Activated CD4-positive, alpha-beta T cell treated with anti-CD3 and anti-CD28 coated beads for 36 hours (primary cell): ENCODE measurements at regions of chr12 and their contacts with region 1.

Region 1: DNA sequence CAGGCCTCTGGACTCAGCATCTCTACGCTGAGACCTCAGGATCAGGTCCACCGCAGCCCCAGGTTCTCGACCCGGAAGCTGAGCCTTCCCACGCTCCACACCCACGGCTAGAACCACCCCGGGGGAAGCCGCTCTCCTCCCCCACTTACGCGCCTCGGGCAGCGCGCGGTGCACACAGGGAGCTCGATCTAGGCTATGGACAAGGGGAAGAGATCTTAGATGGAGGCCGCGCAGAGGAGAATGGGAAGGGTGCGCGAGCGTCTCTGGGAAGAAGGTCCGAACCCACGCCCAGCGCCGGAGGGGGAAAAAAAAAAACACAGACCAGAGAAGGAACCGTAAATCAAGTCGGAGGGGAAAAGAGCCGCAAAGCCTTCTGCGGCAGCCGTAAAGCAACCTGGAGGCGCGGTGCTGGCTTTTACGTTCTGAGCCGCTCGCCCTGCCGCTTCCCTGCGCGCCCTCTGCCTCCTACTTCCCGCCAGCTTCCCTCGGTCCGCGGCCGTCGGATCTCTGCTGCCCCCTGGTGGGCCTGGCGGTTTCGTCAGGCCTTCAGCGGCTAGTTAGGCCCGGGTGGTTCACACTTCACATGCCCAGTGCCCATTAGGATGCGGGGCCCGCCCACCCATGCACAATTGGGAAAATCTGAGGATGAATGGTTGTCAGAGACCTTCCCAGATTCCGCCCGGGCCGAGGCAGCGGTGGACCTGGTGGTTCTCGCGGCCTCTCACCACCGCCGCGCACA is at the start of gene RAD52:
- DNase-seq: peak; percentile 99
- ATAC-seq: peak; percentile 93
- H3K4me3 Mint-ChIP-seq: peak within 1 kb of the TSS; percentile 100
- H3K27ac Mint-ChIP-seq: peak within 1 kb of the TSS; percentile 98
- H3K4me1 Mint-ChIP-seq: peaks cover 37% of the 10 kb centered on the region
- H3K27me3 Mint-ChIP-seq: no peaks in the 10 kb centered on the region
- total RNA-seq, gene RAD52: 16.0 to 17.4 TPM

Region 2: GRCh38 chr12:389139-390096 is 560.2 kb before region 1 on chr12 and contains the start of gene KDM5A:
- CTCF ChIA-PET with region 1: no interaction called
- POLR2A ChIA-PET with region 1: no interaction called
- intact Hi-C with region 1: loop called in 1 of 2 experiments (anchors 1 kb)
- DNase-seq: peak; percentile 94
- ATAC-seq: peak; percentile 94
- H3K4me3 Mint-ChIP-seq: peak within 1 kb of the TSS; percentile 89
- H3K27ac Mint-ChIP-seq: peak within 1 kb of the TSS; percentile 96
- H3K4me1 Mint-ChIP-seq: peaks cover 26% of the 10 kb centered on the region
- H3K27me3 Mint-ChIP-seq: no peaks in the 10 kb centered on the region
- total RNA-seq, gene KDM5A: 40.3 to 58.7 TPM

Region 3: DNA sequence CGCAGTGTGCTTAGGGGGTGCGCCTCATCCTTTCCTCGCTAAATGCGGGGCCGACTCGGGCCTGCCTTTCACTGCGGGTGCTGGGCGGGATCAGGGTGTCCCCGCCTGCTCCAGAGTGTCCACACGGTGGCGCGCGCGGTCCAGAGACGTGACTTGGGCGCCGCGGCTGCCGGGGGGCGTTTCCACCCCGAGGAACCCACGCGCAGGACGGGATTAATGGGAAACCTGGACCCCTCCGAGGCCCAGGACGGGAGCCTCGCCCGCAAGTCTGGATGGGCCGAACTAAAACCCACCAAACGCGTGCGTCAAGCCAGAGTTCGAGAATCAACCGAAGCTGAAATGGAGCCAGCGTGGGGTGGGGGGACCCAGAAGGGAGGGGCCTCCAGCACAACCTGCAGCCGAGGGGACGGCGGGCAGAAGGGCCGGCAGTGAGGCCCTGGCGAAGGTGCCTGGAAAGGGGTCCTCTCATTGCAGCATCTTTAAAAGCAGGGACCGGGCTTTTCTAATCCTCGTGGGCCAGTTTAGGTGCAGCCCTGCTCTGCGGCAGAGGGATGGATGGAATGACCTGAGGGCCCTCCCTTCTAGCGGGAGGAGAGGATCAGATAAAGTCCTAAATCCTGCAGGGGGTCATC is 379.7 kb before region 1 on chr12:
- CTCF ChIA-PET with region 1: interaction called, 3 read pairs
- POLR2A ChIA-PET with region 1: no interaction called
- intact Hi-C with region 1: loop called (anchors 1 kb)
- DNase-seq: peak; percentile 94
- ATAC-seq: peak; percentile 89
- H3K4me3 Mint-ChIP-seq: peak overlapping the region; percentile 74
- H3K27ac Mint-ChIP-seq: peak overlapping the region; percentile 85
- H3K4me1 Mint-ChIP-seq: peaks cover 65% of the 10 kb centered on the region
- H3K27me3 Mint-ChIP-seq: no peaks in the 10 kb centered on the region

Region 4: GRCh38 chr12:666766-667308 is 282.8 kb before region 1 on chr12:
- CTCF ChIA-PET with region 1: interaction called, 3 read pairs
- POLR2A ChIA-PET with region 1: no interaction called
- intact Hi-C with region 1: loop called in 1 of 2 experiments (anchors 2 kb)
- DNase-seq: peak; percentile 53
- ATAC-seq: peak; percentile 45
- H3K4me3 Mint-ChIP-seq: peak overlapping the region; percentile 36
- H3K27ac Mint-ChIP-seq: peak overlapping the region; percentile 79
- H3K4me1 Mint-ChIP-seq: peaks cover 86% of the 10 kb centered on the region
- H3K27me3 Mint-ChIP-seq: no peaks in the 10 kb centered on the region

Region 5: GRCh38 chr12:905261-906031 is 44.2 kb before region 1 on chr12:
- CTCF ChIA-PET with region 1: interaction called, 4 read pairs
- POLR2A ChIA-PET with region 1: interaction called, 11 read pairs
- intact Hi-C with region 1: loop called in 1 of 2 experiments (anchors 2 kb)
- DNase-seq: peak; percentile 10
- ATAC-seq: peak; percentile 71
- H3K4me3 Mint-ChIP-seq: no peak overlapping the region
- H3K27ac Mint-ChIP-seq: peak overlapping the region; percentile 59
- H3K4me1 Mint-ChIP-seq: peaks cover 39% of the 10 kb centered on the region
- H3K27me3 Mint-ChIP-seq: no peaks in the 10 kb centered on the region

Region 6: GRCh38 chr12:1093166-1093751 is 143.6 kb after region 1 on chr12:
- CTCF ChIA-PET with region 1: interaction called, 8 read pairs
- POLR2A ChIA-PET with region 1: no interaction called
- intact Hi-C with region 1: loop called (anchors 5 kb)
- DNase-seq: peak; percentile 46
- ATAC-seq: peak; percentile 71
- H3K4me3 Mint-ChIP-seq: no peak overlapping the region
- H3K27ac Mint-ChIP-seq: no peak overlapping the region
- H3K4me1 Mint-ChIP-seq: peaks cover 27% of the 10 kb centered on the region
- H3K27me3 Mint-ChIP-seq: no peaks in the 10 kb centered on the region

Region 7: DNA sequence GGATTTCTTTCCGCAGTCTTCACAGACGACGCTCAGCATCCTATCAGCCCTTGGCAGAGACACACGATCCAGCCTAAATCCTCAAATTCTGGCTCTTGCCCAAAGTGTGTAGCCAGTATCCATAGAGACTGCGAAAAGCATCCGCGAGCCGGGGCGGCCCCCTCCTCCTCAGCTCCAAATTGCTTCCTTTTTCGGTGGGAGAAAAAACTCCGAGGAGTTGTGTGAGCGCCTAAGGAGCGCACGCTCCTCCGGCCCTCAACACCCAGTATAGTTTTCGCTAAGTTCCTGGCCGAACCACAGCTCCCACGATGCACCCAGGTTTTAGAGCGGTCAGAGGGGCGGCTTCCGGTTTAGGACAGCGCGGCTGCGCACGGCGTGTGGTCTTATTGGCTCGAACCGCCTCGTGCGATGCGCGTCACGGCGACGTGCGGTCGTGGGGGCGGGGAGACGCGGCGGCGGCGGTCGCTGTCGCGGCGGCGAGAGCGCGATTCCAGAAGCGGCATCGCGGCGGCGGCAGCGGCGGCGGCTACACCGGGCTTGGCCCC is 741.0 kb after region 1 on chr12 and contains the start of gene ADIPOR2:
- CTCF ChIA-PET with region 1: no interaction called
- POLR2A ChIA-PET with region 1: no interaction called
- intact Hi-C with region 1: loop called in 1 of 2 experiments (anchors 2 kb)
- DNase-seq: peak; percentile 96
- ATAC-seq: peak; percentile 99
- H3K4me3 Mint-ChIP-seq: peak within 1 kb of the TSS; percentile 95
- H3K27ac Mint-ChIP-seq: peak within 1 kb of the TSS; percentile 97
- H3K4me1 Mint-ChIP-seq: peaks cover 47% of the 10 kb centered on the region
- H3K27me3 Mint-ChIP-seq: peaks cover 3% of the 10 kb centered on the region
- total RNA-seq, gene ADIPOR2: 51.7 to 52.6 TPM